ENCODE measurements at regions of chr22 and their contacts with region 1.

Region 1: GRCh38 chr22:21791635-21792625 is 56.3 kb upstream of the YPEL1 start:
- DNase-seq: peak; percentile 64
- H3K4me3 Mint-ChIP-seq: no peak overlapping the region
- H3K27ac Mint-ChIP-seq: peak overlapping the region; percentile 35
- H3K4me1 Mint-ChIP-seq: peaks cover 18% of the 10 kb centered on the region
- H3K27me3 Mint-ChIP-seq: no peaks in the 10 kb centered on the region

Region 2: DNA sequence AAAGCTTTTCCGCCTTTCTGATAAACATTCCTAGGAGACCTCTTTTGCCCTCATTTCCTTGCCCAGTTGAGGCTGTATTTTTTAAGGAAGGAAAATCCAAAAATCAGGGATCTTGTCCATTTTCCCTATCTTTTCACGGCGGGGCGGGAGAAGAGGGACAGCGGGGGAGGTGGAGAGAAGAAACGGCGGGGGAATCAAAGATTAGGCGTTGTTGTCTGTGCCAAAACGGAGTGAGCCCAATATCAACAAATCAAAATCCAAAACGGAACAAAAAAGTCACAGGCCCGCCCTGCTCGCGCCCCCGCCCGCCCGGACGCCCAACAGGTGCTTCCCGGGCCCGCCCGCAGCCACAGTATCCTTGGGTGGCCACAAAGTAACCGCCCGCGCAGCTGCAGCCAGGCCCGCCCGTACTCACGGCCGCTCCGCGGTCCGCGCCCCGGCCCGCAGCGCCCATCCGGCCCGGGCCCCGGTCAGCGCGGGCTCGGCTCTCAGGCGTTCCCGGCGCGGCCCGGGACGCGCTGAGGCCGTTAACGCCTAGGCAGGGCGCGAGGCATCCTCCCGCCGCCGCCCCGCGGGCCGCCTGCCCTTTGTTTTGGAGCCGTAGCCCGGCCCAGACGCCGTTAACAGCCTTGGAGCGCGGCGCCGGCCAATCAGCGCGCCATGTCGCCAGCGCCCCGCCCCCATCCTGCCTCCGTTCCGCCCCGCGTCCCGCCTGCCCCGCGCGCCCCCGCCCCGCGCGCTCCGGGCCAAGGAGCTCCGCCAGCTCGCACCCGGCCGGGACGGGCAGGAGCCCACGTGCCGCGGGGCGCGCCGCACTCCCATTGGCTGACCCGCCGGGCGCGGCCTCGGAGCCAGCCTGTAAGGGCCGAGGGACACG is 56.5 kb before region 1 on chr22 and contains the start of gene YPEL1:
- CTCF ChIA-PET with region 1: interaction called, 5 read pairs
- POLR2A ChIA-PET with region 1: no interaction called
- intact Hi-C with region 1: loop called (anchors 1 kb)
- DNase-seq: peak; percentile 95
- H3K4me3 Mint-ChIP-seq: peak within 1 kb of the TSS; percentile 80
- H3K27ac Mint-ChIP-seq: peak within 1 kb of the TSS; percentile 49
- H3K4me1 Mint-ChIP-seq: peaks cover 13% of the 10 kb centered on the region
- H3K27me3 Mint-ChIP-seq: peaks cover 1% of the 10 kb centered on the region
- total RNA-seq, gene YPEL1: 1.6 to 1.8 TPM

Region 3: GRCh38 chr22:21760640-21761039 is 31.3 kb before region 1 on chr22:
- CTCF ChIA-PET with region 1: no interaction called
- POLR2A ChIA-PET with region 1: interaction called, 4 read pairs
- intact Hi-C with region 1: loop called (anchors 2 kb)
- DNase-seq: no peak
- H3K4me3 Mint-ChIP-seq: no peak overlapping the region
- H3K27ac Mint-ChIP-seq: no peak overlapping the region
- H3K4me1 Mint-ChIP-seq: peaks cover 58% of the 10 kb centered on the region
- H3K27me3 Mint-ChIP-seq: peaks cover 4% of the 10 kb centered on the region

Region 4: DNA sequence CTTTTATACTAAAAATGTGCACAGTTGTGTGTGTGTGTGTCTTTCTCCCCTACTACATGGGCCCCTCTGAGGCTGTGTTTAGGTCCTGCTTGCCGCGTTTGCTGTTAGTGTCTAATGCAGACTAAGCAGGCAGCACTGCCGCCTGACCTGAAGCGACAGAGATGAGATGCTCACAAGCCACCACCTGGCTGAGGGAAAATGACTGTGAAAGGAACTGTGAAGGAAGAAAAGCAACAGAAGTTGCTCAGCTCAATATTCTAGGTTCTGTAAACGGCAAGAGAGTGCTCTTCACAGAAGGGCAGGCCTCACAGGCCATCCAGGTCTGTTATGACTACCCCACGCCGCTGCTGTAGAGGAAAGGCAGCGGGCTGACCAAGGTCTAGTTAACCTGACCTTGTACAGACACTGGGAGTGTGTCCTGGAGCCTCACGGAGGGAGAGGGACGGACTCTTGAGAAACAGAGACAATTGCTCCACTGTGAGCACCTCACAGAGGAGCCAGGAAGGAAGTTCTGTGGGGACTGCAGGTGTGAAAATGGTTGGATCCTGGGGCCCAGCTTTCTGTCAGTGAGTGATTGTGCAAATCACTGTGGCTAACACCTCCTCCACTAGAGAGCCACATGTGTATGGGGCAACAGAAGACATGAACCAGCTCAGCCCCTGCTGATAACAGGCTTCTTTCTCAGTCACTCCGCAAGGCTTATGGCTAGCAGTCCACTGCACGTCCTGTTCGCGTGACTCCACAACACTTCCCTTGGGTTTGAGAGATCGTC is 25.1 kb before region 1 on chr22:
- CTCF ChIA-PET with region 1: interaction called, 3 read pairs
- POLR2A ChIA-PET with region 1: interaction called, 4 read pairs
- intact Hi-C with region 1: loop called (anchors 1 kb)
- DNase-seq: peak; percentile 85
- H3K4me3 Mint-ChIP-seq: peak overlapping the region; percentile 5
- H3K27ac Mint-ChIP-seq: peak overlapping the region; percentile 66
- H3K4me1 Mint-ChIP-seq: peaks cover 68% of the 10 kb centered on the region
- H3K27me3 Mint-ChIP-seq: peaks cover 5% of the 10 kb centered on the region

Region 5: GRCh38 chr22:21816787-21817496 is 25.0 kb after region 1 on chr22:
- CTCF ChIA-PET with region 1: no interaction called
- POLR2A ChIA-PET with region 1: no interaction called
- intact Hi-C with region 1: loop called (anchors 1 kb)
- DNase-seq: peak; percentile 35
- H3K4me3 Mint-ChIP-seq: peak overlapping the region; percentile 33
- H3K27ac Mint-ChIP-seq: peak overlapping the region; percentile 81
- H3K4me1 Mint-ChIP-seq: peaks cover 56% of the 10 kb centered on the region
- H3K27me3 Mint-ChIP-seq: no peaks in the 10 kb centered on the region

Region 6: GRCh38 chr22:21867528-21868266 is 75.8 kb after region 1 on chr22 and contains the start of gene MAPK1:
- CTCF ChIA-PET with region 1: interaction called, 4 read pairs
- POLR2A ChIA-PET with region 1: no interaction called
- intact Hi-C with region 1: loop called (anchors 2 kb)
- DNase-seq: peak; percentile 96
- H3K4me3 Mint-ChIP-seq: peak within 1 kb of the TSS; percentile 87
- H3K27ac Mint-ChIP-seq: peak within 1 kb of the TSS; percentile 98
- H3K4me1 Mint-ChIP-seq: peaks cover 37% of the 10 kb centered on the region
- H3K27me3 Mint-ChIP-seq: peaks cover 9% of the 10 kb centered on the region
- total RNA-seq, gene MAPK1: 70.2 to 75.6 TPM

Region 7: DNA sequence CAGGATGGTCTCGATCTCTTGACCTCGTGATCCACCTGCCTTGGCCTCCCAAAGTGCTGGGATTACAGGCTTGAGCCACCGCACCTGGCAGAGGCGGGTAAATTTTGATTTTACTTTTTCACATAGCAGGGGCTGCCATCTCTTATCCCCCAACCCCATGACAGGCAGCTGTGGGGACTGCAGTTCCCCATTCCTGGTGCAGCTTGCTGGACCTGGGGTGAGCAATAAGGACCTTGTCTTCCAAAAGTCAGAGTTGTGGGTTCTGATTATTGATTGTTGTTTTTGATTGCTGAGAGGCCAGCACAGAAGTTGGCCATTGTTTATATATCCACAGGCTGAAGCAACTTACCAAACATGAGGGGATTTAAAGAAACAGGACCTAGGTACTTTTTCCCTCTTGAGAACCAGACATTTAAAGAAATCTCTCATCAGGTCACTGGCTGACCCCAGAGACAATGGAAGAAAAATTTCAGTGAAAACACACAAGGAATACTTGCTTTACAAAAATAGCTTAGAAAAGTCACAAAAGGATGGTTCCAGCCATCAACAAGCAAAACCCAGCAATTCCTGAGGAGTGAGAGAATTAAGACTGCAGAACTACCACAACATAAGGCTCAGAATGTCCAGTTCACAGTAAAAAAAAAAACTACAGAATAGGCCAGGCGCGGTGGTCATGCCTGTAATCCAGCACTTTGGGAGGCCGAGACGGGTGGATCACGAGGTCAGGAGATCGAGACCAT is 97.5 kb after region 1 on chr22:
- CTCF ChIA-PET with region 1: no interaction called
- POLR2A ChIA-PET with region 1: no interaction called
- intact Hi-C with region 1: no loop called
- DNase-seq: no peak
- H3K4me3 Mint-ChIP-seq: no peak overlapping the region
- H3K27ac Mint-ChIP-seq: no peak overlapping the region
- H3K4me1 Mint-ChIP-seq: no peaks in the 10 kb centered on the region
- H3K27me3 Mint-ChIP-seq: no peaks in the 10 kb centered on the region

Measured in activated CD4-positive, alpha-beta memory T cell treated with anti-CD3 and anti-CD28 coated beads for 36 hours (primary cell).